ENCODE measurements at regions of chr17 and their contacts with region 1.

Region 1: GRCh38 chr17:50200457-50201275 is 765 bp downstream of the COL1A1 start:
- DNase-seq: peak; percentile 84 to 96
- H3K4me3 ChIP-seq: peak overlapping the region; percentile 49 to 72 (median 60)
- H3K27ac ChIP-seq: no peak overlapping the region
- H3K4me1 ChIP-seq: peaks cover 0 to 5% (median 1%) of the 10 kb centered on the region in 4 experiments; a peak in 5 of 7 replicates
- H3K27me3 ChIP-seq: peaks cover 0 to 29% (median 14%) of the 10 kb centered on the region in 4 experiments; a peak in 5 of 7 replicates
- CTCF ChIP-seq: peak; percentile 76 to 85 (median 85)
- EP300 ChIP-seq: no peak
- POLR2A ChIP-seq: no peak
- RAD21 ChIP-seq: peak; percentile 89 to 90

Region 2: DNA sequence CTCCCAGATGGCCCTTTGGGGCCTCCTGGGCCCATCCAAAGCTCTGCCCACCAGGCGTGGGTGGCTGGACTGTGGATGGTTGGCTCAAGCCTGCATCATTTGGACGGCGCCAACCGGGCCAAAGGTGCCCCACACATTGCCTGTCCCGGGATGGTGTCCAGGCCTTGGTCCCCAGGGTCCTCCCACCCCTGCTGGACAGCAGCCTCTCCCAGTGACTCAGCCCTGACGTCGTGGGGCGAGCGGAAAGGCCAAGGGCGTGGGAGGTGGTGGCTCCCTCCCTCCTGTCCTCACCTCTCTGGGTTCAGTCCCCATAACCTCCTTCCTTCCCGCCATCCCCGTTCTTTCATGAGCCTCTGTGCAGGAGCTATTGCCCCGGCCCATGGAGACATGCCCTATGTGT is 273.8 kb before region 1 on chr17:
- CTCF ChIA-PET with region 1: no interaction called
- POLR2A ChIA-PET with region 1: no interaction called
- DNase-seq: no peak
- H3K4me3 ChIP-seq: no peak overlapping the region
- H3K27ac ChIP-seq: no peak overlapping the region
- H3K4me1 ChIP-seq: no peaks in the 10 kb centered on the region
- H3K27me3 ChIP-seq: no peaks in the 10 kb centered on the region
- CTCF ChIP-seq: no peak
- EP300 ChIP-seq: no peak
- POLR2A ChIP-seq: no peak
- RAD21 ChIP-seq: no peak

Region 3: DNA sequence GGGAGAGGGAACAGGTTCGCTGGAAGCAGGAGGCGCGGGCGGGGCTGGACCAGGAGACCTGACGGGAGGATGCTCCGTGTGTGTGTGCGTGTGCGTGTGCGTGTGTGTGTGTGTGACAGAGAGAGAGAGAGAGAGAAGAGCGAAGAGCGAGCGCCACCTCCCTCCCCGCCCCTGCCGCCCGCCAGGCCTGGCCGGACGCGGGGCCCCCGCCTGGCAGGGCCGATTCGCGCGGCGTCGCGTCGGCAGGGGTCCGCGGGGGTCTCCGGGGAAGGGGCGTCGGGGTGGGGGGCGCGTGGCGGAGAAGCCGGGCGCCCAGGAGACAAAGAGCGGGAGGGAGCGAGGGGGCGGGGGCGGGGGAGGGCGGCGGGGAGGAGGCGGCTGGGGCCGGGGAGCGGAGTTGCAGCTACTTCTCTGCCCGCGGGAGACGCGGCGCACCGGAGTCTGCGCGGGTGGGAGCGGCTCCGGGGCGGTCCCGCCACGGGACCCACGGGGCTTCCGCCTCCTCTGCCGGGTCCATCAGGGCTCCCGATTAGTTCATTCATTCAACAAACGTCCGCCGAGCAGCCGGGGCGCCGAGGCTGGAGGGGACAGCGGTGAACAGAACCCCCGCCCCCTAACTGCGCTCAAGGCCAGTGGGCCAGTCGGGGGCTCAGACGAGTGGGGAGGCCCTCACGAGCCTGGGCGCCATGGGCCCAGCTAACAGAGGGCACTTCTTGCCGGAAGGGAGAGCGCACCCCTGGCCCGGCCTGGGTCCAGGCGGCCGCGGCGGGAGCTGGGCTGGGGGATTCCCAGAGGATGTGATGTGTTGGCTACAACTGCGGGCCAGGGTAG is 70.7 kb before region 1 on chr17 and contains the start of gene SAMD14:
- CTCF ChIA-PET with region 1: interaction called, 11 read pairs
- POLR2A ChIA-PET with region 1: no interaction called
- DNase-seq: no peak
- H3K4me3 ChIP-seq: peak within 1 kb of the TSS; percentile 37 to 97 (median 74)
- H3K27ac ChIP-seq: no peak within 1 kb of the TSS
- H3K4me1 ChIP-seq: peaks cover 8 to 34% (median 30%) of the 10 kb centered on the region in 4 experiments
- H3K27me3 ChIP-seq: peaks cover 0 to 11% (median 2%) of the 10 kb centered on the region in 4 experiments; a peak in 4 of 7 replicates
- CTCF ChIP-seq: no peak
- EP300 ChIP-seq: no peak
- POLR2A ChIP-seq: no peak
- RAD21 ChIP-seq: no peak
- total RNA-seq, gene SAMD14: 5.8 and 5.9 TPM in 2 replicates

Region 4: GRCh38 chr17:50177983-50178834 is 22.5 kb before region 1 on chr17:
- CTCF ChIA-PET with region 1: interaction called, 145 read pairs
- POLR2A ChIA-PET with region 1: interaction called, 9 read pairs
- DNase-seq: peak; percentile 39 to 80
- H3K4me3 ChIP-seq: peak overlapping the region in 3 of 4 experiments; percentile 17 to 42 (median 24); a peak in 3 of 8 replicates
- H3K27ac ChIP-seq: no peak overlapping the region
- H3K4me1 ChIP-seq: peaks cover 4 to 22% (median 15%) of the 10 kb centered on the region in 4 experiments
- H3K27me3 ChIP-seq: no peaks in the 10 kb centered on the region
- CTCF ChIP-seq: peak; percentile 50 to 60 (median 57)
- EP300 ChIP-seq: no peak
- POLR2A ChIP-seq: peak in 1 of 2 experiments; percentile 45; a peak in 1 of 3 replicates
- RAD21 ChIP-seq: peak in 1 of 2 experiments; percentile 24; a peak in 1 of 4 replicates

Region 5: DNA sequence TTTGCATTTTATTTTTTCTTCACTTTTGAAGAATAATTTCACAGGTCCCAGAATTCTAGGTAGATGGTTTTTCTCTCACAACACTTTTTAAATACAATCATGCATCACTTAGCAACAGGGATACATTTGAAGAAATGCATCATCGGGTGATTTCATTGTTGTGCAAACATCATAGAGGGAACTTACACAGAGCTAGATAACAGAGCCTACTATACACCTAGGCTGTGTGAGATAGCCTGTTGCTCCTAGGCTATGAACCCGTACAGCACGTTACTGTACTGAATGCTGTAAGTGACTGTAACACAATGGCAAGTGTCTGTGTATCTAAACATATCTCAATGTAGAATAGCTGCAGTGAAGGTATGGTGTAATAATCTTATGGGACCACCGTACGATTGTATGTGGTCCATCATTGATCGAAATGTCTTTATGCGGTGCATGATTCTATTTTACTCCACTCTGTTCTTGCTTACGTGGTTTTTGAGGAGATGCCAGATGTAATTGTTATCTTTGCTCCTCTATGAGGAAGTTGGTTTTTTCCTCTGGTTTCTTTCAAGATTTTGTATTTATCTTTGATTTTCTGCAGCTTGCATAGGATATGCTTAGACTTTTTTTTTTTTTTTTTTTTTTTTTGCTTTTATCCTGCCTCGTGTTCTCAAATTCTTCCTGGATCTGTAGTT is 38.1 kb after region 1 on chr17:
- CTCF ChIA-PET with region 1: interaction called, 11 read pairs
- POLR2A ChIA-PET with region 1: no interaction called
- DNase-seq: no peak
- H3K4me3 ChIP-seq: no peak overlapping the region
- H3K27ac ChIP-seq: no peak overlapping the region
- H3K4me1 ChIP-seq: no peaks in the 10 kb centered on the region
- H3K27me3 ChIP-seq: no peaks in the 10 kb centered on the region
- CTCF ChIP-seq: no peak
- EP300 ChIP-seq: no peak
- POLR2A ChIP-seq: no peak
- RAD21 ChIP-seq: no peak

Region 6: GRCh38 chr17:50304781-50305404 is 104.2 kb after region 1 on chr17:
- CTCF ChIA-PET with region 1: interaction called, 1,349 read pairs
- POLR2A ChIA-PET with region 1: interaction called, 4 read pairs
- DNase-seq: no peak
- H3K4me3 ChIP-seq: no peak overlapping the region
- H3K27ac ChIP-seq: no peak overlapping the region
- H3K4me1 ChIP-seq: peaks cover 0 to 7% (median 3%) of the 10 kb centered on the region in 4 experiments; a peak in 4 of 7 replicates
- H3K27me3 ChIP-seq: no peaks in the 10 kb centered on the region
- CTCF ChIP-seq: no peak
- EP300 ChIP-seq: no peak
- POLR2A ChIP-seq: no peak
- RAD21 ChIP-seq: no peak

Region 7: DNA sequence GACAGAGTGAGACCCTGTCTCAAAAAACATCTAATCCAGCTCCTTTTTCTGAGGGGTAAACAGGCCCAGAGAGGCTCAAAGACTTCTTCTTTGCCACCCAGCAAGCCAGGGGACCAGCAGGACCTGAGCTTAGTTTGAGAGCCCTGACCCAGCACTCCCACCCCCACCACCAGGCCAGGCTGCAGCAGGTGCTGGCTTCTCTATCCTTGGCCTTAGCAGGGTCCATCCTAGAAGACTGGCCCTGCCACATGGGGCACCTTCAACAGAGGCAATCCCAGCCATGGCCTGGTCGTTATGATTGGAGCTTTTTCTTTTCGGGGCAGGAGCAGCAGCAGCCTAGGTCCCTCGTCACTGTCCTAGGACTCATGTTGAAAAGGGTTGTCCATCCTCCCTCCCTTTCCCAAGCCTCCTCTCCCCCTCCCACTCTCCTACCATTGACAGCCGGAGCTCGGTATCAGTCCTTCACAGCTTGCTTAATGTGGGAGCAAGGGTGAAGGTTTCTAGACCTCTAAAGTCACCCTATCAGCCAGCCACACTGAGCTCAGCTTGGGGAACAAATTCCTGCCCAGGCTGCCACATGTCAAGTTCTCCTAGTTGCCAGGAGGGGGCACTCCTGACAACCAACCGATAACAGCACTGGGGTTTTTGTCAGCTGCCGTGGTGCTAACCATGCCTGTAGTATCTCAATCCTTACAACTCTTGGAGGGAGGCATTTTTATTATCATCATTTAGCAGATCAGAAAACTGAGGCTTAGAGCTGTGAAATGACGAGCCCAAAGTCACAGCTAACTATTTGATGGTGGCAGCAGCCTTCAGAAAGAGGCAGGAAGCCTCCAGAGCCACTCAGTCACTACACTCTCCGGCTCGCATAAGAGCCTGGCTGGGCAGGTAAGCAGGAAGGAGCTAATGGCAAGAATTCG is 161.2 kb after region 1 on chr17:
- CTCF ChIA-PET with region 1: interaction called, 13 read pairs
- POLR2A ChIA-PET with region 1: interaction called, 7 read pairs
- DNase-seq: peak; percentile 34 to 67
- H3K4me3 ChIP-seq: no peak overlapping the region
- H3K27ac ChIP-seq: no peak overlapping the region
- H3K4me1 ChIP-seq: peaks cover 0 to 27% (median 11%) of the 10 kb centered on the region in 4 experiments; a peak in 6 of 7 replicates
- H3K27me3 ChIP-seq: no peaks in the 10 kb centered on the region
- CTCF ChIP-seq: peak; percentile 63 to 85 (median 79)
- EP300 ChIP-seq: no peak
- POLR2A ChIP-seq: no peak; a peak in 1 of 3 replicates
- RAD21 ChIP-seq: peak; percentile 53 to 65

Region 8: GRCh38 chr17:50443368-50443971 is 242.8 kb after region 1 on chr17:
- CTCF ChIA-PET with region 1: no interaction called
- POLR2A ChIA-PET with region 1: no interaction called
- DNase-seq: no peak
- H3K4me3 ChIP-seq: no peak overlapping the region
- H3K27ac ChIP-seq: no peak overlapping the region
- H3K4me1 ChIP-seq: peaks cover 0 to 6% (median 0%) of the 10 kb centered on the region in 4 experiments; a peak in 2 of 7 replicates
- H3K27me3 ChIP-seq: no peaks in the 10 kb centered on the region; a peak in 1 of 7 replicates
- CTCF ChIP-seq: no peak
- EP300 ChIP-seq: no peak
- POLR2A ChIP-seq: no peak
- RAD21 ChIP-seq: no peak

Region 9: DNA sequence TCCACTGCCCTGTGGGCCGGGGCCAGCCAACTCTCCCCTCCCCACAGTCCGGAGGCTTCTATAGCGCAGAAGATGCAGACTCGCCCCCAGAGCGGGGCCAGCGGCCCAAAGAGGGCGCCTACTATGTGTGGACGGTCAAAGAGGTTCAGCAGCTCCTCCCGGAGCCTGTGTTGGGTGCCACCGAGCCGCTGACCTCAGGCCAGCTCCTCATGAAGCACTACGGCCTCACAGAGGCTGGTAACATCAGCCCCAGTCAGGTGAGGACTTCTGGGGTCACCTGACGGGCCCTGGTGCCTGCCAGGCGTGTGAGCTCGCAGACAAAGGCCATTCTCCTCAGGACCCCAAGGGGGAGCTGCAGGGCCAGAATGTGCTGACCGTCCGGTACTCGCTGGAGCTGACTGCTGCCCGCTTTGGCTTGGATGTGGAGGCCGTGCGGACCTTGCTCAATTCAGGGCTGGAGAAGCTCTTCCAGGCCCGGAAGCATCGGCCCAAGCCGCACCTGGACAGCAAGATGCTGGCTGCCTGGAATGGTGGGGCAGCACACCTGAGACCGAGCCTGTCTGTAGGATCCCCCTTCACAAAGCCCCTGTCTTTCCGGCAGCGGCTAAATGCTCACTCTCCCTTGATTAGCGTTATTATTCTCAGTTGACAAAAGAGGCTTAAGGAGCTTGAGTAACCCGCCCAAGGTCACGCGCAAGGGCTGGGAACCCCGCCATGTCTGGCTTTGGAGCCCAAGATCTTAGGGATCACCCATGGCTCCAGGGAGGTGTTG is 350.2 kb after region 1 on chr17:
- CTCF ChIA-PET with region 1: no interaction called
- POLR2A ChIA-PET with region 1: no interaction called
- DNase-seq: peak; percentile 84 to 90
- H3K4me3 ChIP-seq: no peak overlapping the region
- H3K27ac ChIP-seq: no peak overlapping the region
- H3K4me1 ChIP-seq: peaks cover 3 to 12% (median 6%) of the 10 kb centered on the region in 4 experiments
- H3K27me3 ChIP-seq: no peaks in the 10 kb centered on the region
- CTCF ChIP-seq: peak; percentile 96 to 99 (median 98)
- EP300 ChIP-seq: peak in 1 of 2 experiments; percentile 33; a peak in 1 of 3 replicates
- POLR2A ChIP-seq: no peak
- RAD21 ChIP-seq: peak; percentile 98